B cell (primary cell): ENCODE measurements at regions of chr17 and their contacts with region 1.

Region 1: GRCh38 chr17:7478276-7479153 is 916 bp downstream of the ZBTB4 start:
- DNase-seq: peak; percentile 79
- ATAC-seq: peak; percentile 11
- H3K4me3 ChIP-seq: peak overlapping the region; percentile 52 to 88 (median 79)
- H3K4me3 Mint-ChIP-seq: peak overlapping the region; percentile 96
- H3K27ac ChIP-seq: peak overlapping the region; percentile 75 to 95
- H3K27ac Mint-ChIP-seq: peak overlapping the region; percentile 93
- H3K4me1 ChIP-seq: peaks cover 31 to 53% of the 10 kb centered on the region in 2 donors
- H3K4me1 Mint-ChIP-seq: peaks cover 66% of the 10 kb centered on the region
- H3K27me3 ChIP-seq: no peaks in the 10 kb centered on the region
- H3K27me3 Mint-ChIP-seq: no peaks in the 10 kb centered on the region
- CTCF ChIP-seq: no peak

Region 2: GRCh38 chr17:7444682-7445618 is 33.6 kb before region 1 on chr17 and contains the start of gene CHRNB1:
- CTCF ChIA-PET with region 1: interaction called, 5 read pairs
- POLR2A ChIA-PET with region 1: interaction called, 10 read pairs
- intact Hi-C with region 1: no loop called
- DNase-seq: peak; percentile 58
- ATAC-seq: peak; percentile 46
- H3K4me3 ChIP-seq: peak within 1 kb of the TSS in 4 of 5 experiments; percentile 31 to 53 (median 42)
- H3K4me3 Mint-ChIP-seq: peak within 1 kb of the TSS; percentile 84
- H3K27ac ChIP-seq: no peak within 1 kb of the TSS
- H3K27ac Mint-ChIP-seq: peak within 1 kb of the TSS; percentile 15
- H3K4me1 ChIP-seq: peaks cover 33 to 40% of the 10 kb centered on the region in 2 donors
- H3K4me1 Mint-ChIP-seq: peaks cover 29% of the 10 kb centered on the region
- H3K27me3 ChIP-seq: peaks cover 0 to 78% (median 51%) of the 10 kb centered on the region in 4 experiments
- H3K27me3 Mint-ChIP-seq: peaks cover 71% of the 10 kb centered on the region
- CTCF ChIP-seq: no peak
- total RNA-seq, gene CHRNB1: 6.2 and 6.6 TPM in 2 replicates

Region 3: GRCh38 chr17:7460850-7461660 is 17.5 kb before region 1 on chr17:
- CTCF ChIA-PET with region 1: interaction called, 3 read pairs
- POLR2A ChIA-PET with region 1: interaction called, 12 read pairs
- intact Hi-C with region 1: no loop called
- DNase-seq: no peak
- ATAC-seq: no peak
- H3K4me3 ChIP-seq: no peak overlapping the region
- H3K4me3 Mint-ChIP-seq: no peak overlapping the region
- H3K27ac ChIP-seq: no peak overlapping the region
- H3K27ac Mint-ChIP-seq: no peak overlapping the region
- H3K4me1 ChIP-seq: peaks cover 5 to 6% of the 10 kb centered on the region in 2 donors
- H3K4me1 Mint-ChIP-seq: peaks cover 5% of the 10 kb centered on the region
- H3K27me3 ChIP-seq: no peaks in the 10 kb centered on the region
- H3K27me3 Mint-ChIP-seq: no peaks in the 10 kb centered on the region
- CTCF ChIP-seq: no peak